ENCODE measurements at regions of chr9 and their contacts with region 1.

Region 1: DNA sequence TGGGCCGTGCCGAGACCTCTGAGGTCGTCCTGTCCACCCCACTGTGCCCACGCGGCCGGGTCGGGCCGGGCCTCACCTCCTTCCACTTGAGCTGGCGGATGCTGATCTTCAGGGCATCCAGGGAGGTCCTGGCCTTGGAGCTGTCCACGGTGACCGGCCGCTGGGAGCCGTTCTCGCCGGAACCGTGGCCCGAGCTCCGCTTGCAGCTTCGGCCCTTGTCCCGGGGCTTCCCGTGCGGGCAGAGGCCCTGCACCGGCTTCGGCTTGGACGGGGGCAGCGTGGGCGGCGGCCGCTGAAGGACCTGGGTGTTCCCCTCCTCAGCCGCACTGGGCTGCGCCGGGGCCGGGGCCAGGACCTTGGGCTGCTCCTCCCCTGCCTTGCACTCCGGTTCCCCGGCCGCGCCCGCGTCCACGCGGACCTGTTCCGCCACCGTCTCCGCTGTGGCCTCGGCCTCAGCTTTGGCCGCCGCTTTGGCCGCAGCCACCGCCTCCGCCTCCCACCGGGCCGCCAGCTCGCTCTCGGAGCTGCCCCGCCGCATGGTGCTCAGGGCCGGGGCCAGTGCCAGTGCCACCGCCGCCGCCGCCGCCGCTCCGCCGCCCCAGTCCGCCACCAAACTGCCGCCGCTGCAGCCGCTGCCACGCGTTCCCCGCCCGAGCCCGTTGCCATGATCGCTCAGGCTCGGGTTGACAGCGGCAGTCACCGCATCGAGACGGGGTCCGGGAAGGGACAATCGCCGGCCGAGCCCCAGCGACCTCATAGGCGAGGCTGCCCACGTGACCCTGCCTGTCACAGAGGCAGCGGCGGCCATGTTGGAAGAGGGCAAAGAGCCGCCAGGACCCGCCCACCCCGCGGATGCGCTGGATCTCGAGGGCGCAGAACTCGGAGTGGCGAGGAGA is at the start of gene TTLL11:
- DNase-seq: peak; percentile 92
- ATAC-seq: peak; percentile 96
- H3K4me3 Mint-ChIP-seq: peak within 1 kb of the TSS; percentile 85
- H3K27ac Mint-ChIP-seq: peak within 1 kb of the TSS; percentile 3
- H3K4me1 Mint-ChIP-seq: peaks cover 42% of the 10 kb centered on the region
- H3K27me3 Mint-ChIP-seq: peaks cover 9% of the 10 kb centered on the region
- CTCF ChIP-seq: no peak
- total RNA-seq, gene TTLL11: 3.6 and 4.7 TPM in 2 replicates

Region 2: DNA sequence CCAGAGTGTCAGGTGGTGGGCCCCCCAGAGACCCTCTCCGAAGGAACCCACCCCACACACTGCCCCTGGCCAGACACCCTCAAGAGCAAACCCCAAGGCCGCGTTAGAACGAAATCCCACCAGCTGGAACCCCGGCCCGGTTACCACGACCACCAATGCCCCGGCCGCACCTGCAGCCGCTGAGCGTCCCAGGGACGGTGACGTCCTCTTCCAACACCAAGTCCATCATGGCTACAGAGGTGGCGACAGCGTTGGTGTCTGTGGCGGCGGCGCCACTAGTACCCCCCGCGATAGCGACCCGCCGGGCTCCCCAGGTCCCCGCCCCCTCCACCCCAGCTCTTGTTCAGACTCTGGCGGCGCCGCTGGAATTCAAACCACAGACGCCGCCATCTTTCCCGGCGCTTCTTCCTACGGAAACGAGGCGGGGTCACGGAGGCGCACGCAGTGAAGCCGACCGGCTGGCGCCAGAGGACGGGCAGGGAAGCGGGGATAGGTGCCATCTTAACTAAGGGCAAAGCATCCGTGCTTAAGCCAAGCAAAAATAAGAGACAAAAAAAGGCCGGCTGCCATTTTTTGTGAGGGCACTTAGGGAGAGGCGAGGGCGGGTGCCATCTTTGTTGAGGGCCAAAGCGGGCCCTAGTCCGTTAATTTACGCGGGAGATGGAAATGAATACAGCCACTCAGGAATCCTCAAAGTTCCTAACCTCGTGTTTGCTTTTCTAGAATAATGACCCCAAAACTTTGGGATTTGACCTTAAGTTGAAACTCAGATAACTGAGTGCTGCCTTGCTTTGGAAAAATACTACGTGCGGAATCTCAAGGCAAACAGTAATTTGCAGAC is 1512.9 kb before region 1 on chr9 and contains the start of gene CDK5RAP2:
- CTCF ChIA-PET with region 1: no interaction called
- POLR2A ChIA-PET with region 1: no interaction called
- intact Hi-C with region 1: loop called (anchors 1 kb)
- DNase-seq: peak; percentile 78
- ATAC-seq: peak; percentile 94
- H3K4me3 Mint-ChIP-seq: peak within 1 kb of the TSS; percentile 94
- H3K27ac Mint-ChIP-seq: peak within 1 kb of the TSS; percentile 88
- H3K4me1 Mint-ChIP-seq: peaks cover 47% of the 10 kb centered on the region
- H3K27me3 Mint-ChIP-seq: no peaks in the 10 kb centered on the region
- CTCF ChIP-seq: no peak
- total RNA-seq, gene CDK5RAP2: 63.9 and 80.0 TPM in 2 replicates

Region 3: DNA sequence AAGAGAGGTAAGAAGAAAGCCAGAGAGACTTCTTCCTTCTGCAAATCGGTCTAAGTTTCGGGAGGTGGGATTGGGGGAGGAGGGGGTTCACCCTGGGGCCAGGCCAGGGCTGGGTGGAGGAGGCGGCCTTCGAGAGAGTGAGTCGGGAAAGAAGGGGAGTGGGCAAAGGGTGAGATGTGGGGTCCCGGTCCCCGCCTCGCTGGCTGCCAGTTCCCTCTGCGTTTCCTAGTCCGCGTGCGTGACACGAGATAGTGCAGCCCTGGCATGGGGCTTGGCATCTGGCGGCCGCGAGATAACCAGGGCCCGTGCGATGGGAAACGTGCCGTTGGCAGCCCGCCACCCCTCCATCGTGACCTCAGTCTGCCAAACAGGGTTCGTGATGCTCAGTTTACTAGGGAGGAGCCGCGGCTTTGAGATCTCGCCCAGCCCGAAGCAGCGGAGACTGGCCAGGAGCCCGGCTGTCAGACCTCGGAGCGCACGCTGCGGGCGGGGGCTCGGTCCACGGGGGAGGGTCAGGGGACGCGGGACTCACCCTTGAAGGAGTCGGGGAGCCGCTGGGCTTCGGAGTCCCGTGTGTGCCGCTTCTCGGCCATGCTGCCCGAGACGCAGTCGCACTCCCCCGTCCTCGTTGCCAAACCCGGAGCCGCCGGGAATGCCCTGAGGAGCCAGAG is 723.1 kb before region 1 on chr9 and contains the start of gene STOM:
- CTCF ChIA-PET with region 1: no interaction called
- POLR2A ChIA-PET with region 1: no interaction called
- intact Hi-C with region 1: loop called (anchors 1 kb)
- DNase-seq: no peak
- ATAC-seq: peak; percentile 56
- H3K4me3 Mint-ChIP-seq: peak within 1 kb of the TSS; percentile 93
- H3K27ac Mint-ChIP-seq: peak within 1 kb of the TSS; percentile 96
- H3K4me1 Mint-ChIP-seq: peaks cover 28% of the 10 kb centered on the region
- H3K27me3 Mint-ChIP-seq: no peaks in the 10 kb centered on the region
- CTCF ChIP-seq: no peak
- total RNA-seq, gene STOM: 9.8 and 11.3 TPM in 2 replicates

Region 4: DNA sequence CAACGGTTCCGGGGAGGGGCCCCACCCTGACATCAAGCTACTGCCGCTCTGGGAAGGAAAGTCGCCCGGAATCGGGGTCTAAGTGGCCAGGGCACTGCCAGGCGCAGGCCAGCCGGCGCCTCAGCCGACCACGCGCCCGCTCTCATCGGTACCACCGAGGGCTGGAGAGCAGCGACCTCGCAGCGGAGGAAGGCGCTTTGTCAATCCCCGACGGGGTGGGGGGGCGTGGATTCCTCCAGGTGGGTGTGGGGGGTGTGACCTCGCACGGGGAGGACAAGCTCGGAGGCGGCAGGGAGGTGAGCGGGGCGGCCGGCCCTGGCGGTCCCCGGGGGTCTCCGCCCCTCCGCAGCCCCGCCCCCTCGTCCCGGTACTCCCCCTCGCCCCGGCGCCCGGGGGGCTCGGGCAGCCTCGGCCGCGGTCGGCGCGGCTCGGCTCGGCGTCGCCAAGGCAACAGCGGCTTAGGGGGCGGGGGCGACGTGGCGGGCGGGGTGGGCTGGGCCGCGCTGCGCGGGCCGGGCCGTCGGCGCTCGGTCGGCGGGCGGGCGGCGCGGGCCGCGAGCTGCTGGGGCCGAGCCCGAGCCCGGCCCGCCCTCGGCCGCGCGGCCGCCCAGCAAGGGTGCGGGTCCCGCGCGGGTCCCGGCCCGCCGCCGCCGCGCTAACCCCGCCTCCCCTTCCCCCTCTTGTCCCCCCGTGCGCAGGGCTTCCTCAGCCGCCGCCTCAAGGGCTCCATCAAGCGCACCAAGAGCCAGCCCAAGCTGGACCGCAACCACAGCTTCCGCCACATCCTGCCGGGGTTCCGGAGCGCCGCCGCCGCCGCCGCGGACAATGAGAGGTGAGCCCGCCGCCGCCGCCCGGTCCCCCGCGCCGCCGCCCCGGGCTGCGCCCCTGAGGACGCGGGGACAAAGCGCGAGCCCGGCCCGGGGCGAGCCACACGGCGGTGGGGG is 394.0 kb before region 1 on chr9:
- CTCF ChIA-PET with region 1: no interaction called
- POLR2A ChIA-PET with region 1: no interaction called
- intact Hi-C with region 1: loop called (anchors 10 kb)
- DNase-seq: peak; percentile 48
- ATAC-seq: peak; percentile 76
- H3K4me3 Mint-ChIP-seq: peak overlapping the region; percentile 72
- H3K27ac Mint-ChIP-seq: no peak overlapping the region
- H3K4me1 Mint-ChIP-seq: peaks cover 26% of the 10 kb centered on the region
- H3K27me3 Mint-ChIP-seq: peaks cover 23% of the 10 kb centered on the region
- CTCF ChIP-seq: no peak

Region 5: DNA sequence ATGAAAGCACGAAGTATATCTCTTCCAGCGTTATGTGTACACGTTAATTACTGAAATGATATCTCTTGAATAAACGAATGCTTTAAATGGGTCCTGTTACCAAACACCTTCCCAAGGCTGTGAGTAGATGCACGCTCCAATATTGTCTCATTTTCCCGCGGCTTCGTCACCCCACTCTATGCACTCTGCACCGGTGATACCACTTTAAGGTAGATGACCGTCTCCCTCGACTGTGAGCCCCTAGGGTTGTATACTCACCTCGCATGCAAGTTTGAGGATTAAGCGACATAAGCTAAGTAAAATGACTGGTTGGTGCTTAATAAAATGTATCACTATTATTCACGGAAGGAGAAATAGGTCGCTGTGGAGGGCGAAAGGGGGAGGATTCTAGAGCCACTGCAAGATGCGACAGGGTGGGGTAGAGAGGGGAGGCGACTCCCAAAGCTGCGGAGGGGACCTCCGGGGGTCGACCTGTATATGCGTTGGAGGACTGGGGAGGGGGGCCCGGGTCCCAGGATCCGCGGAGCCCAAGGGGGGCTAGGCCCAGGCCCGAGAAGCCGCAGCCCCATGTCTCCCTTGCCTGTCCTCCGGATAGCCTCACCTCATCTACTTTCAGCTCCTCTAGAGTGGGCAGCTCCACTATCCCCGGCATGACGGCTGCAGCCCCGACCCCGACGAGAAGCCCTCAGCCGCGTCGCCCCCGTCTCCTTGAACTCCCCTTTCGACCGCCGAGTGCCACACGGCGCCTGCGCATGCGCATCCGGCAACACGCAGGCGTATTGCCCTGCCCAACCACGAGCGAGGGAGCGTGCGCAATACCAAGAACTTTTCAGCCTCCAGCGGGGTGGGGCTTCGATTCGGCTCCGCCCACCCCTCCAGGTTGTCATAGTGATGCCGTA is 66.4 kb after region 1 on chr9 and contains the starts of genes MORN5 and NDUFA8:
- CTCF ChIA-PET with region 1: no interaction called
- POLR2A ChIA-PET with region 1: no interaction called
- intact Hi-C with region 1: loop called (anchors 1 kb)
- DNase-seq: peak; percentile 93
- ATAC-seq: peak; percentile 96
- H3K4me3 Mint-ChIP-seq: peak within 1 kb of the TSS; percentile 98
- H3K27ac Mint-ChIP-seq: peak within 1 kb of the TSS; percentile 94
- H3K4me1 Mint-ChIP-seq: peaks cover 35% of the 10 kb centered on the region
- H3K27me3 Mint-ChIP-seq: peaks cover 24% of the 10 kb centered on the region
- CTCF ChIP-seq: no peak
- total RNA-seq, gene MORN5: not detected in 2 replicates
- total RNA-seq, gene NDUFA8: 21.1 and 21.2 TPM in 2 replicates

Region 6: DNA sequence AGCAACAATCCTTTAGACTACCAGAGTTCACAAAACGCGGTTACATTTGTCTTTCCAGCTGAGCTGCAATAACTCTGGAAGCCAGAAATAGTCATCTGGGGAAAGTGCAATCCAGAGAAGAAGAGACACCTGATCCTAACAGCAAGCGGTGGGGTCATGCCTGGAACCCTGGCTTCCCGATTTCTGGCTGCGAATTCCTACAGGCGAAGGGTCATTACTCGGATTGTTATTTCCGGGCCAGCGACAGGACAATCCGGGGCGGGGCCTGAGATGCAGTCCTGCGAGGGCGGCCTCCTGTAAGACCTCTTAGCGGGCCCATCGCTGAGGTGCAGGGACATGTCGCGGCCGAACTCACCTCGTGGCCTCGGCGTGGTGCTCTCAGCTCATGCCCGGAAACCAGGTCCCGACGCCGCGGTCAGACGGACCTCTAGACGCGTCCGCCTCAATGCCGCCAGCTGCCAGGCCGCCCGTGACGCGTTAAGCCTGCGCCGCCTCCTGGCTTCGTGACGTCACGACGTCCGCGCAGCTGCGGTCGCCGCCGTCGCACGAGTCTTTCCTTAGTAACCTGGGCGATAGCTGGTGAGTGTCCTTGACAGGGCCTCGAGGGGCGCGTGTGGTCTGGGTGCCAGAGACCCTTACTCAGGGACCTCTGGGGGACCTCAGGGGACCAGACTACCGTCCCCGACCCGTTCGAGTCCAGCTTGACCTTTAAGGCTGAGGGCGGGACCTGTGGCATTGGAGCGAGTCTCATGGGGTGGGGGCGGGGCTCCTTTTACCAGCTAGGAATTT is 171.7 kb after region 1 on chr9 and contains the starts of genes MRRF and RBM18:
- CTCF ChIA-PET with region 1: interaction called, 6 read pairs
- POLR2A ChIA-PET with region 1: no interaction called
- intact Hi-C with region 1: loop called (anchors 1 kb)
- DNase-seq: peak; percentile 94
- ATAC-seq: peak; percentile 83
- H3K4me3 Mint-ChIP-seq: peak within 1 kb of the TSS; percentile 99
- H3K27ac Mint-ChIP-seq: peak within 1 kb of the TSS; percentile 100
- H3K4me1 Mint-ChIP-seq: peaks cover 42% of the 10 kb centered on the region
- H3K27me3 Mint-ChIP-seq: no peaks in the 10 kb centered on the region
- CTCF ChIP-seq: no peak
- total RNA-seq, gene MRRF: 55.2 and 60.6 TPM in 2 replicates
- total RNA-seq, gene RBM18: 14.2 and 15.3 TPM in 2 replicates

Region 7: GRCh38 chr9:122453677-122454135 is 360.8 kb after region 1 on chr9:
- CTCF ChIA-PET with region 1: interaction called, 9 read pairs
- POLR2A ChIA-PET with region 1: no interaction called
- intact Hi-C with region 1: loop called (anchors 1 kb)
- DNase-seq: no peak
- ATAC-seq: no peak
- H3K4me3 Mint-ChIP-seq: no peak overlapping the region
- H3K27ac Mint-ChIP-seq: no peak overlapping the region
- H3K4me1 Mint-ChIP-seq: no peaks in the 10 kb centered on the region
- H3K27me3 Mint-ChIP-seq: peaks cover 22% of the 10 kb centered on the region
- CTCF ChIP-seq: no peak